ENCODE measurements at regions of chr14 and their contacts with region 1.

Region 1: DNA sequence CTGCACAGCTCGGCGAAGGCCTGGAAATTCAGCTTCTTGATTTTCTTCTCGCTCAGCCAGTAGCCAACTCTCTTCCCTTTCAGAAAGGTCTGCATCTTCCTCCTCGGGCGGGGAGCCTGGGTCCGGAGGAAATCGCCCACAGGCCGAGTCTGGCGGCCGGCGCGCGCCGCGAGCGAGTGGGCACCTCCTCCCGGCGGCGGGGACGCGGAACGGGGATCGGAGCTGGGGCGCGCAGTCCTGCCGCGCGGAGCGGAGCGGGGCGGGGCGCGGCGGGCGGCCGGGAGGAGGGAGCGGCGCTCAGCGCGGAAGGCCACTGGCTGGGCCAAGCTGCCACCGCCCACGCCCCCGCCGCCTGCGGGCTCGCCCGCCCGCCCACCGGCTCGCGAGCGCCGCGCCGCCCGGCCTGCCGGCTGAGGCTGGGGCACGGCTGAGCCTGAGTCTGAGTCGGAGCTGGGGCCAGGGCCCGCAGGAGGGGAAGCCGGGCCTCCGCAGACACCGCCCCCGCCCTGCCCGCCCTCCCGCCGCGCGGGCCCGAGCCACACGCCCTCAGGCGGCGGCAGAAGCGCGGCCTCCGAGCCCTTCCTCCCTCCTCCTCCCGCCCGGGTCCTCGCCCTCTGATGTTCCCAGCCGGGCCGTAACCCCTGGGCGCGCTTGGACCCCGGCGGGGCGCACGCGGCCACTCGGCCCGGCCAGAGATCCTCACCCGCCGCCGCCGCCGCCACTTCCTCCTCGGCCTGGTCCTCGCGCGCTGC is 480 bp downstream of the ITPK1 start:
- DNase-seq: no peak
- H3K4me3 ChIP-seq: peak overlapping the region; percentile 70
- CTCF ChIP-seq: peak; percentile 3

Region 2: DNA sequence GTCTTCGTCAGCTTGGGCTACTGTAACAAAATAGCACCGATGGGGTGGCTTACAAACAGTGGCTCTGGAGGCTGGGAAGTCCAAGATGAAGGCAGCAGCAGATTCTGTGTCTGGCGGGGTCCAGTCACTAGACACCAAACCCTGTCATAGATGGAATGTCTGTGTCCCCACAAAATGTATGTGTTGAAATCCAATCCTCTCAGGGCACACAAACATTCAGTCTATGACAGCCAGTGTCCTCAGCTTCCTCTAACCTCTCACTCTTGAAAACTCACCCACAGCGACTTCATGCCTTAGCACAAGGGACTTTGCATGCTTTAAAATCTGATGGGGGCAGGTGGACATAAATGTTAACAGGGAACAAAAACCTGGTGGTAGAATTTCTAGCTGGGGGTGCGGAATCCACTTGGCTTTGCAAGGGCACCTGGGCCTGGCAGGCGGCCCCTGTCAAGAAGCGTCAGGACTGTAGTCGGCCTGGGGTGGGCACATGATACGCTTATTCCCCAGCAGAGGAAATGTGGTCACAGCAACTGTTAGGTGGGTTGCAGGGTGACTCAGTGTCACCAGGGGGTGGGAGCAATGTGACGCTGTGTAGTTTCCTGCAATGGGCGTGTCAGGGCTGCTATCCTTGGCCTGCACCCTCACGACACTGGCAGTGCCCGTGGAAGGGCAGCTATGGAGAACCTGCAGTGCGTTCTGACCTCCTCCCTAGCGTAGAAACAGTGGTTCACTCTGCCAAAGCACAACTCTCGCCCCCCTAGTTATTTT is 584.0 kb before region 1 on chr14:
- CTCF ChIA-PET with region 1: no interaction called
- POLR2A ChIA-PET with region 1: no interaction called
- DNase-seq: no peak
- H3K4me3 ChIP-seq: no peak overlapping the region
- CTCF ChIP-seq: no peak

Region 3: GRCh38 chr14:92813201-92813600 is 302.0 kb before region 1 on chr14:
- CTCF ChIA-PET with region 1: no interaction called
- POLR2A ChIA-PET with region 1: no interaction called
- DNase-seq: no peak
- H3K4me3 ChIP-seq: no peak overlapping the region
- CTCF ChIP-seq: no peak

Region 4: GRCh38 chr14:92951912-92952471 is 163.3 kb before region 1 on chr14:
- CTCF ChIA-PET with region 1: interaction called, 123 read pairs
- POLR2A ChIA-PET with region 1: no interaction called
- DNase-seq: no peak
- H3K4me3 ChIP-seq: no peak overlapping the region
- CTCF ChIP-seq: peak; percentile 97

Region 5: DNA sequence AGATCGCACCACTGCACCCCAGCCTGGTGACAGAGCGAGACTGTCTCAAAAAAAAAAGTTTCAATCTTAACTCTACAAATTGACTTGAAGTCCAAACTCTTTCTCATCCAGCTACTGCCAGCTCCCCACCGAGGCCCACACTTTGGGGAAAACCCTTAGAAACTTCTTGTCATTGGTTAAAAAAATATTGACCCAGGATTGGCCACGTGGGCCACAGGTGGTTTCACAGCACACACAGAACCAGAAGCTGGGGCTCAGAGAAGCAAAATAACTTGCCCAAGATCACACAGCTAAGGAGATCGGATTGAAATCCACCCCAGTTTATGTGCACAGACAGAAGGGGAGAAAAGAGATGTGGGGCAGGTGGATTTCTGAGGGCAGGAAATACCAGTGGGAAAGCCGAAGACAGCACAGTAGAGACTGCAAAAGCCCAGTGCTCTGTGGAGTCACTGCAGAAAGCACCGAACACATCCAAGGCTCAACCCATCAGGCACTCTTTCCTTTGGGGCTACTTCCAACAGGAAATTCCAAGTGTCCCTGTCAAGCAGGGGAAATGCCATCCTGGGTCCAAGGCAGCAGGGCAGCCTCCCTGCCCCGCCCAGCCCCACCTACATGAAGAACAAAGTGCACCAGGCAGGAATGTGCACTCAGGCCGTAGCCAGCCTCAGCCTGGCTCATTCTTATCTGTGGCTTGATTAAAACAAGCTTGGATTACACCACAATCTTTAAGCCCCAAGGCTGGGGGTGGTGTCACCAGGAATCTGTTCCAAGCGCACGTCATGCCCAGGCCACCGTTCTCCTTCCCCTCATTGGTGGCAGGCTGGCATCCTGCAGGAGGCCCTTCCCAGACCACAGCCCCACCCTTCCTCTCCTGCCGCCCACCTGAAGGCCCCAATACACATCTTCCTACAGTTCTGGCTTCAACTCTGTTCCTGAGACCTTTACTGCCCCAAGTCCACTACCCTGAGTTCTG is 72.0 kb before region 1 on chr14:
- CTCF ChIA-PET with region 1: interaction called, 16 read pairs
- POLR2A ChIA-PET with region 1: no interaction called
- DNase-seq: no peak
- H3K4me3 ChIP-seq: no peak overlapping the region
- CTCF ChIP-seq: no peak

Region 6: GRCh38 chr14:93092606-93093556 is 22.4 kb before region 1 on chr14:
- CTCF ChIA-PET with region 1: interaction called, 113 read pairs
- POLR2A ChIA-PET with region 1: no interaction called
- DNase-seq: no peak
- H3K4me3 ChIP-seq: no peak overlapping the region
- CTCF ChIP-seq: no peak

Region 7: GRCh38 chr14:93146119-93146518 is 30.9 kb after region 1 on chr14:
- CTCF ChIA-PET with region 1: interaction called, 326 read pairs
- POLR2A ChIA-PET with region 1: no interaction called
- DNase-seq: no peak
- H3K4me3 ChIP-seq: no peak overlapping the region
- CTCF ChIP-seq: no peak

Region 8: DNA sequence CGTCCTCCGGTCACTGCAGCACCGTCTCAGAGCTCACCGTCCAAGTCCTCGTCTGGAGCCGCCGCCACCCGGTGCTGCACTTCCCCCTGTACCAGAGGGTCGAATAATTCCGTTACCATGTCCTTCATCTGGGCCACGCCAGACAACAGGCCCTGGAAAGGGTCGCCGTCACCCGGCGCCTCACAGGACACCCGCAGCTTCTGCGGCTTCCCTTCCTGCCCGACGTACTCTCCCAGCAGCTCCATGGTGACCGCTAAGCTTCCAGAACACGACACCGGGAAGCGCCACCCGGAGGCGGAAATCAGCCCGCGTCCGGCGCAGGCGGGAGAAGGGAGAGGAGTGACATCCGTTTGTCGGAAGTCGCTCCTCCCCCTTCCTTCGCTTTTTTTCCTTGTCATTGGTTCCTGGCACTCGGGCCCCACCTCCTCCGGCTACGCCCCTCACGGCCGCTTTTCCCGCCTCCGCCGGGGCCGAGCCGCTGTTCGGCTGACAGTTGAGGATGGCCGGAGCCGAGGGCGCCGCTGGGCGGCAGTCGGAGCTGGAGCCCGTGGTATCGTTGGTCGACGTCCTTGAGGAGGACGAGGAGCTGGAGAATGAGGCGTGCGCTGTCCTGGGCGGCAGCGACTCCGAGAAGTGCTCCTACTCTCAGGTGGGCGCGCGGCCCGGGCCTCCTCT is 91.7 kb after region 1 on chr14 and contains the starts of genes GON7 and UBR7:
- CTCF ChIA-PET with region 1: interaction called, 15 read pairs
- POLR2A ChIA-PET with region 1: no interaction called
- DNase-seq: peak; percentile 75
- H3K4me3 ChIP-seq: peak within 1 kb of the TSS; percentile 92
- CTCF ChIP-seq: peak; percentile 45

Region 9: DNA sequence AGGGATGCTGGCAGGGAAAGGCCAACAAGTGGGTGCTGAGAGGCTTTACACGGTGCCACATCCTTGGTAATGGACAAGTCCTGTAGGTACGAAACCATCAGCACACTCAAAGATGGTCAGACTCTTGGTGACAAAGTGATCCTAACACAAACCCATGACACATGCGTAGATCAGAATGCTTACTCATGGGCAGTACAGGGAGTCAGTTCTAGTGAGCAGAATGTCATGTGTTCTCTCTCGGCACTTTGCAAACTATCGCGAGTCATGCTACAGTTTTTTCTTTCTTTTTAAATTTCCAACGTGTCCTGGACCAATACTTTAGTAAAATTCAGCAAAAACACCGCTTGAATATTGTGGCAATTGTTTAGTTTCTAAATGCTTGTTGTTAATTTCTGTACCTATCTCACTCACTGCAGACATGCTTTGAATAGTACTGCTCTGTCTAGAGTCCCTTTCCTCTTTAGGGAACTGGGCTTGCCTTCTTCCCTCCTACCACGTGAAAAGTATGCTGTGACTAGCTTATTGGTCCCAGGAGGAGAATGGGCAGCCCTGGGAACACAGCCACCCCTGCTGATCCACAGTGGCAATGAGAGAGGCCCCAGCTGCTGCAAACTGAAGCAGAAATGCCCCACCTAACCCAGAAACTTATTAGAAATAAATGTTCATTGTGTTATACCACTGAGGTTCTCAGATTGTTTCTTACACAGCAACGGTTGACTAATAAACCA is 154.3 kb after region 1 on chr14:
- CTCF ChIA-PET with region 1: no interaction called
- POLR2A ChIA-PET with region 1: no interaction called
- DNase-seq: peak; percentile 17
- H3K4me3 ChIP-seq: no peak overlapping the region
- CTCF ChIP-seq: no peak

Measured in AG04449 (cell line).